ENCODE measurements at regions of chr6 and their contacts with region 1.

Region 1: DNA sequence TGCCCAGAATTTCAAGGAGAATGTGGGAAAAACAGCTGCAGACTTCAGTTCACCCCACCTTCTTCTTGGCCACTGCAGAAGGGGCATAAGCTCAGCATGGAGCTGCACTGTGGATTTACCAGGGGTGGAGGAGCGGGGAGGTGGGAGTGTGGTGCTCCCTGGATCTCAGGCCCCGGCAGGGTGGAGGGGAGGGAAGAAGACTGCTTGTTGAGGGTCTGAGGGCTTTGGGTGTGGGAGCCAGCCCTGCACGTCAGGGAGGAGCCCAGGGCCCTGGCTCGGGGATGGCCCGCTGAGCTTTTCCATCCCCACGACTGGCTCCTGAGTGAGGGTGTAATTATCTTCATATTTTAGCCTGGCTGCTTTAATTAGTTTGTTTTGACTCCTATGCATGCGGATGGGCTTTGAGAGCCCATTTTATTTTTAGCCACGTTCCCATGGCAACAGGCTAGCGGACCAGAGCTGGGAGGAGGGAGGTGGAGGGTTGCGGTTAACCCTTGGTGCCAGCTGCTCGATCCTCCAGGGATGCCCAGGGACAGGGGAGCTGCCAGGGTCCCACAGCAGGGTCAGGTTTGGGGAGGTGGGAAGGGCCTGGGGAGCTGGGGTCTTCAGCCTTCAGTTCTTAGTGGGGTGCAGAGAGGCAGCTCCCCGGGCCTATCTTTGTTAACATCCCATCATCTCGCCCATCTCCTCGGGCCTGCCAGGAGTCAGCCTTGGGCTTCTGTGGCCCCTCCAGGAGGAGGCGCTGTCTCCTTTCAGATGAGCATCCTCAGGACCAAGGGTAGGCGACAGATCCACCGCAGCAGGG is 68.2 kb downstream of the RAB44 start:
- DNase-seq: peak; percentile 84
- ATAC-seq: peak; percentile 86
- H3K4me3 Mint-ChIP-seq: no peak overlapping the region
- H3K27ac Mint-ChIP-seq: peak overlapping the region; percentile 74
- H3K4me1 Mint-ChIP-seq: peaks cover 35% of the 10 kb centered on the region
- H3K27me3 Mint-ChIP-seq: no peaks in the 10 kb centered on the region

Region 2: DNA sequence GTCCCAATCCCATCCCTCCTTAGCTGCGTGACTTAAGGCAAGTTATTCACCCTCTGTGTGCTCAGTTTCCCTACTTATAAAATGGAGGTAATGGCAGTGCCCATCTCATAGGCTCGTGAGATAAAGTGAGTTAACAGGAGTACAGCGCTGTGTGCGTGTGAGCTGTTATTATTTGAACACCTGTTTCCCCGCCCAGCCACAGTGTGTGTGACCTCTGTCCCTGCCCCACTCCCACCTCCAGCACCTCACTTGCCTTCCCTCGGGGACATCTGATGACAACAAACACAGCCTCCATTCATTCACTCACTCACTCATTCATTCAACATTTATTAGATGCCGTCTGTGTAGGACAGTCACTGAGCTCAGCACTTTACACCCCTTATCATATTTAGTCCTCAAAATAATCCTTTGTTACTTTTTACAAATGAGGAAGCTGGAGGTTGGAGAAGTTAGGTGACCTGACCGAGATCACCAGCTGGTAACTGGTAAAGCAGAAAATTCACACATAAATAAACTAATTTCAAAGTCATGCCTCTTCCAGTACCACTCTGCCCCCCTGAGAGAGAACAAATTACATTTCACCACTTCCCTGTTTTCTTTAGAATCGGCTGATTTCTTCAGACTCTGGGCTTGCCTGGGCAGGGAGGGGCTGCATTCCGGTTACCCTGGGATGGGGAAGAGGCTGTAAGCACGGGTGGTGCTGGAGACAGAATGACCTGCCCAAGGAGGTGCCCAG is 14.8 kb after region 1 on chr6:
- POLR2A ChIA-PET with region 1: interaction called, 39 read pairs
- DNase-seq: no peak
- ATAC-seq: no peak
- H3K4me3 Mint-ChIP-seq: no peak overlapping the region
- H3K27ac Mint-ChIP-seq: no peak overlapping the region
- H3K4me1 Mint-ChIP-seq: peaks cover 19% of the 10 kb centered on the region
- H3K27me3 Mint-ChIP-seq: peaks cover 20% of the 10 kb centered on the region

Region 3: DNA sequence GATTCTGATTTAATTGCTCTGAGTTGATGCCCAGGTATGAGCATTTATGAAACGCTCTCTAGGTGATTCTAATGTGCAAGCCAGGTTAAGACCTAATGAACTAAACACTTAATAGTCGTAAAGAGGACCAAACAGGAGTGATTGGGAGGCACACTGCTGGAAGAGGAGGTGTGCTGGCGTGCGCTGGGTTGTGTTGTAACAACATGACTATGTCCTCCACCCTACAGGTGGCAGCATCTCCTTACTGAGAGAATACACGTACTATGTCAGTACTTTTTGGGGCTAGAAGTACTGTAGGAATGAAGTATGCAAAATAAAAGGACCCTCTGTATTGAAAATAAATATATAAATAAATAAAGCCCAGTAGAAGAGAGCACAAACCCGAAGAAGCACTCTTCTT is 131.8 kb after region 1 on chr6:
- POLR2A ChIA-PET with region 1: no interaction called
- DNase-seq: no peak
- ATAC-seq: no peak
- H3K4me3 Mint-ChIP-seq: no peak overlapping the region
- H3K27ac Mint-ChIP-seq: no peak overlapping the region
- H3K4me1 Mint-ChIP-seq: peaks cover 3% of the 10 kb centered on the region
- H3K27me3 Mint-ChIP-seq: no peaks in the 10 kb centered on the region

Measured in activated naive CD8-positive, alpha-beta T cell treated with anti-CD3 and anti-CD28 coated beads, Interleukin-2, amount 10 ng/mL, durations not matched to agents 7 days and 5 days (primary cell).